Calu3 (cell line): ENCODE measurements at regions of chr22 and their contacts with region 1.

Region 1: GRCh38 chr22:30485362-30485988 is 13.7 kb upstream of the SEC14L3 start:
- DNase-seq: peak; percentile 78
- H3K4me3 Mint-ChIP-seq: no peak overlapping the region
- H3K27ac Mint-ChIP-seq: no peak overlapping the region
- H3K4me1 Mint-ChIP-seq: peaks cover 16% of the 10 kb centered on the region
- H3K27me3 Mint-ChIP-seq: peaks cover 2% of the 10 kb centered on the region
- CTCF ChIP-seq: peak; percentile 97

Region 2: GRCh38 chr22:30301995-30302809 is 183.3 kb before region 1 on chr22:
- CTCF ChIA-PET with region 1: no interaction called
- intact Hi-C with region 1: no loop called
- DNase-seq: peak; percentile 59
- H3K4me3 Mint-ChIP-seq: peak overlapping the region; percentile 37
- H3K27ac Mint-ChIP-seq: peak overlapping the region; percentile 81
- H3K4me1 Mint-ChIP-seq: peaks cover 85% of the 10 kb centered on the region
- H3K27me3 Mint-ChIP-seq: no peaks in the 10 kb centered on the region
- CTCF ChIP-seq: no peak

Region 3: GRCh38 chr22:30386960-30387827 is 98.3 kb before region 1 on chr22 and contains the start of gene RNF215:
- CTCF ChIA-PET with region 1: no interaction called
- intact Hi-C with region 1: loop called (anchors 10 kb)
- DNase-seq: peak; percentile 93
- H3K4me3 Mint-ChIP-seq: peak within 1 kb of the TSS; percentile 77
- H3K27ac Mint-ChIP-seq: peak within 1 kb of the TSS; percentile 71
- H3K4me1 Mint-ChIP-seq: peaks cover 18% of the 10 kb centered on the region
- H3K27me3 Mint-ChIP-seq: no peaks in the 10 kb centered on the region
- CTCF ChIP-seq: peak; percentile 92
- total RNA-seq, gene RNF215: 42.5 and 48.8 TPM in 2 replicates